ENCODE measurements at regions of chr14 and their contacts with region 1.

Region 1: GRCh38 chr14:93543766-93544165 is 113.0 kb downstream of the UNC79 start:
- DNase-seq: peak; percentile 33
- ATAC-seq: peak; percentile 54
- H3K4me3 ChIP-seq: no peak overlapping the region
- H3K27ac ChIP-seq: no peak overlapping the region
- H3K4me1 ChIP-seq: no peaks in the 10 kb centered on the region
- H3K27me3 ChIP-seq: no peaks in the 10 kb centered on the region
- CTCF ChIP-seq: peak; percentile 53
- POLR2A ChIP-seq: no peak
- RAD21 ChIP-seq: peak; percentile 53

Region 2: DNA sequence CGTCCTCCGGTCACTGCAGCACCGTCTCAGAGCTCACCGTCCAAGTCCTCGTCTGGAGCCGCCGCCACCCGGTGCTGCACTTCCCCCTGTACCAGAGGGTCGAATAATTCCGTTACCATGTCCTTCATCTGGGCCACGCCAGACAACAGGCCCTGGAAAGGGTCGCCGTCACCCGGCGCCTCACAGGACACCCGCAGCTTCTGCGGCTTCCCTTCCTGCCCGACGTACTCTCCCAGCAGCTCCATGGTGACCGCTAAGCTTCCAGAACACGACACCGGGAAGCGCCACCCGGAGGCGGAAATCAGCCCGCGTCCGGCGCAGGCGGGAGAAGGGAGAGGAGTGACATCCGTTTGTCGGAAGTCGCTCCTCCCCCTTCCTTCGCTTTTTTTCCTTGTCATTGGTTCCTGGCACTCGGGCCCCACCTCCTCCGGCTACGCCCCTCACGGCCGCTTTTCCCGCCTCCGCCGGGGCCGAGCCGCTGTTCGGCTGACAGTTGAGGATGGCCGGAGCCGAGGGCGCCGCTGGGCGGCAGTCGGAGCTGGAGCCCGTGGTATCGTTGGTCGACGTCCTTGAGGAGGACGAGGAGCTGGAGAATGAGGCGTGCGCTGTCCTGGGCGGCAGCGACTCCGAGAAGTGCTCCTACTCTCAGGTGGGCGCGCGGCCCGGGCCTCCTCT is 336.8 kb before region 1 on chr14 and contains the starts of genes GON7 and UBR7:
- CTCF ChIA-PET with region 1: interaction called, 3 read pairs
- POLR2A ChIA-PET with region 1: no interaction called
- dilution Hi-C with region 1: no loop called
- in situ Hi-C with region 1: loop called (anchors 10 kb)
- intact Hi-C with region 1: loop called (anchors 1 kb)
- DNase-seq: peak; percentile 96
- ATAC-seq: peak; percentile 95
- H3K4me3 ChIP-seq: peak within 1 kb of the TSS; percentile 88
- H3K27ac ChIP-seq: peak within 1 kb of the TSS; percentile 51
- H3K4me1 ChIP-seq: peaks cover 2% of the 10 kb centered on the region; the same call in 1 of the 2 replicates
- H3K27me3 ChIP-seq: no peaks in the 10 kb centered on the region
- CTCF ChIP-seq: peak; percentile 44
- POLR2A ChIP-seq: peak; percentile 80
- RAD21 ChIP-seq: no peak
- total RNA-seq, gene GON7: 4.3 and 10.3 TPM in 2 replicates
- total RNA-seq, gene UBR7: 29.4 and 55.8 TPM in 2 replicates

Region 3: DNA sequence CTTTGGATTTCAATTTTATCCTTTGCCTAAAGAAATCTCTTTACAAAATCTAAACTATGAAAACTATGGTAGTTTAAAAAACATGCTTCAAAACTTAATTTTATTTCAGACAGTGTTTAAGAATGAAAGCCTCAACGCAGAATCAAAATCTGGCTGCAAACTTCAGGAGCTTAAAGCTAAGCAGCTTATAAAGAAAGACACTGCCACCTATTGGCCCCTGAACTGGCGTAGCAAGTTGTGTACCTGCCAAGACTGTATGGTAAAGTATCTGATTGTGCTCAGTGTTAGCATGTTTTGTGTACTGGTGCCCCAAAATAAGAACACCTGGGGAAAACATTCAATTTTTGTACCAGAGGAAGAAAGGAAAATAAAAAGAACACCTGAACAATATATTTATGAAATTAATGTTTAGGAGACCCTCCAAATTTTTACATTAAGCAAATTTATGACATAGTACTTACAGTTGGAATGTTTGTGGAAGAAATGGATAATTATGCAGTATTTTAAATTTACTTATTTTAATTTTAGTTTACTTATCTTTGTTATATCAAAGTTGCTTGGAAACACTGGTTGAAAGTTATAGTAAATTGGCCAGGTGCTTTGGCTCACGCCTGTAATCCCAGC is 324.6 kb before region 1 on chr14:
- CTCF ChIA-PET with region 1: no interaction called
- POLR2A ChIA-PET with region 1: no interaction called
- dilution Hi-C with region 1: no loop called
- in situ Hi-C with region 1: loop called (anchors 10 kb)
- intact Hi-C with region 1: no loop called
- DNase-seq: peak; percentile 65
- ATAC-seq: peak; percentile 70
- H3K4me3 ChIP-seq: no peak overlapping the region
- H3K27ac ChIP-seq: no peak overlapping the region
- H3K4me1 ChIP-seq: no peaks in the 10 kb centered on the region
- H3K27me3 ChIP-seq: no peaks in the 10 kb centered on the region
- CTCF ChIP-seq: peak; percentile 53
- POLR2A ChIP-seq: no peak
- RAD21 ChIP-seq: peak; percentile 55

Region 4: GRCh38 chr14:93234798-93235197 is 309.0 kb before region 1 on chr14:
- CTCF ChIA-PET with region 1: no interaction called
- POLR2A ChIA-PET with region 1: no interaction called
- dilution Hi-C with region 1: no loop called
- in situ Hi-C with region 1: no loop called
- intact Hi-C with region 1: loop called (anchors 2 kb)
- DNase-seq: peak; percentile 85
- ATAC-seq: no peak; the same call in 1 of the 2 replicates
- H3K4me3 ChIP-seq: no peak overlapping the region
- H3K27ac ChIP-seq: no peak overlapping the region
- H3K4me1 ChIP-seq: peaks cover 4% of the 10 kb centered on the region
- H3K27me3 ChIP-seq: no peaks in the 10 kb centered on the region
- CTCF ChIP-seq: no peak
- POLR2A ChIP-seq: no peak
- RAD21 ChIP-seq: no peak

Region 5: DNA sequence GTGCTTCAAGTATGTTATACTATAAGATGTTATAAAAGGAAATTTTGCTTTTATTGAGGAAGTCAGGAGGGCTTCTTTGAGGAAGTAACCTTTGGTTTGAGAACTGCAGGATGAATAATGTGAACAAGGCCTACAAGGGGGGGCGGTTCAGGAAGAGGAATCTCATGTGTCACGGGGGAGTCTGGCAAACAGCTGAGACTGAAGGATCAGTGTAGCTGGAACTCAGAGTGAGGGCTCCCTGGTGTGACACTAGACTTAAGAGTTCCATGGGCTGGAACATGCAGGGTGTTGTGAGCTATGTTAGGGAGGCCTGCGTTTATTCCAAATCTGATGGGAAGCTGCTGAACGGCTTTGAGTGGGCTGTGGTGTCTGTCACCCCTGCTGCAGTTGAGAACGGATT is 50.7 kb before region 1 on chr14:
- CTCF ChIA-PET with region 1: no interaction called
- POLR2A ChIA-PET with region 1: no interaction called
- dilution Hi-C with region 1: no loop called
- in situ Hi-C with region 1: no loop called
- intact Hi-C with region 1: no loop called
- DNase-seq: no peak
- ATAC-seq: no peak
- H3K4me3 ChIP-seq: no peak overlapping the region
- H3K27ac ChIP-seq: no peak overlapping the region
- H3K4me1 ChIP-seq: no peaks in the 10 kb centered on the region
- H3K27me3 ChIP-seq: no peaks in the 10 kb centered on the region
- CTCF ChIP-seq: no peak
- POLR2A ChIP-seq: no peak
- RAD21 ChIP-seq: no peak

Measured in IMR-90 (cell line).